Stomach (tissue), 19 donors: ENCODE measurements at regions of chr12 and their contacts with region 1.

Region 1: DNA sequence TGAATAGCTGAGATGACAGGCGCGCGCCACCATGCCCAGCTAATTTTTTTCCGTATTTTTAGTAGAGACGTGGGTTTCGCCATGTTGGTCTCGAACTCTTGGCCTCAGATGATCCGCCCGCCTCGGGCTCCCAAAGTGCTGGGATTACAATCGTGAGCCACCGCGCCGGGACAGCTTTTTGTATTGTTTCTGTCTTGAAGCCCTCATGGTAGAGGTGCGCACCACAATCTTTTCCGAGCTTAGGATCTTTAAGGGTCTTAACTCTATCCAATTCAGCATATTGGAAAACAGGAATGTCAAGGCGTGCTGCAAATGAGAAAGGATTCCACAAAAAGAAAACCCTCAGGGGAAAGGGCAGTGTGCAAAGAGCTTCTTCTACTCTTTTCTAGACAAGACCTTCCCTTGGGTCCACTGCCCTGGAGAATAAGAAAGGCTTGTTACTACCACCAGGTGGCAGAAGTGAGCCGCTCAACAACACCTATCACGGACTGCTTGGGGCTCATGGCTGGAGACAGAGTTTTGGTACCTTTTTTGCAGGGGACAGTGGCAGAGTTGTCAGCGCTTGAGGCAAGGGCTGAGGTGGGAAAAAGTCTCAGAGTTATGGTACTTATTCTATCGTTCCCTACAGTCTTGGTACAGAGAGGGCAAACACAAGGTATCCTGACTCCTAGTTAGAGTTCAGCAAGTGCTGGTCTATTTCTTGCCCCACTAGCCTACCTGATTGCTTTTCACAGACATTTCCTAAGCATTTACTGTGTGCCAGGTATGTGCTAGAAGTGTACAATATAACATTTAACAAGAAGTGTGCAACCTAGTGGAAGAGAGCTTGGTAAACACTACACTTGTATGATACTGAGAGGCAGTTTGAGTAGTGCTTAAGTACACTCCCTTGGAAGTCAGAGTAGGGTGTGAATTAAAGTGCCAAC is 16.4 kb upstream of the SP7 start:
- DNase-seq: peak; percentile 88 to 96
- H3K4me3 ChIP-seq: no peak overlapping the region
- H3K27ac ChIP-seq: peak overlapping the region in 2 of 5 donors; percentile 28 to 46
- H3K4me1 ChIP-seq: peaks cover 0 to 11% (median 9%) of the 10 kb centered on the region in 4 donors
- H3K27me3 ChIP-seq: no peaks in the 10 kb centered on the region
- CTCF ChIP-seq: peak in 6 of 7 experiments; percentile 70 to 95 (median 87)
- EP300 ChIP-seq: no peak
- POLR2A ChIP-seq: no peak

Region 2: DNA sequence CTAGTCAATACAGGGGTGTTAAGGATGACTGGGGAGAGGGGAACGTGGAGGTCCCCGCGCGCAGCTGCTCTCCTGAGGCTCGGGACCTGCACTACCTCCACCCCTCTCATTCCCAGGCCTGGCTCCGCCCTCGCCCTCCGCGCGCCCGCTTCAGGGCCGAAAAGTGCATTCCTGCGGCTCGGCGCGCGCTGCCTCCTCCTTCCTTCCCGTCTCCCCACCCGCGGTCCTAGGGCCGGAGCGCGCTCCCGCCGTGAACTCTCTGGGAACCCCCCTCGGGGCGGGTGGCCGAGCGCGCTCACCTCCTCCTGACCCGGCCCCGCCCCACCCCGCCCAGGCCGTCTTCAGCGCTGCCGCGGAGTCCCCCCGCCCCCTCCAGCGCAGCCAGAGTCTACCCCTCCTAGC is 131.8 kb before region 1 on chr12:
- intact Hi-C with region 1: no loop called
- DNase-seq: peak; percentile 89 to 98
- H3K4me3 ChIP-seq: peak overlapping the region; percentile 63 to 88 (median 83)
- H3K27ac ChIP-seq: peak overlapping the region; percentile 96 to 99 (median 99)
- H3K4me1 ChIP-seq: peaks cover 71 to 91% (median 89%) of the 10 kb centered on the region in 4 donors
- H3K27me3 ChIP-seq: no peaks in the 10 kb centered on the region
- CTCF ChIP-seq: no peak
- EP300 ChIP-seq: no peak
- POLR2A ChIP-seq: no peak

Region 3: DNA sequence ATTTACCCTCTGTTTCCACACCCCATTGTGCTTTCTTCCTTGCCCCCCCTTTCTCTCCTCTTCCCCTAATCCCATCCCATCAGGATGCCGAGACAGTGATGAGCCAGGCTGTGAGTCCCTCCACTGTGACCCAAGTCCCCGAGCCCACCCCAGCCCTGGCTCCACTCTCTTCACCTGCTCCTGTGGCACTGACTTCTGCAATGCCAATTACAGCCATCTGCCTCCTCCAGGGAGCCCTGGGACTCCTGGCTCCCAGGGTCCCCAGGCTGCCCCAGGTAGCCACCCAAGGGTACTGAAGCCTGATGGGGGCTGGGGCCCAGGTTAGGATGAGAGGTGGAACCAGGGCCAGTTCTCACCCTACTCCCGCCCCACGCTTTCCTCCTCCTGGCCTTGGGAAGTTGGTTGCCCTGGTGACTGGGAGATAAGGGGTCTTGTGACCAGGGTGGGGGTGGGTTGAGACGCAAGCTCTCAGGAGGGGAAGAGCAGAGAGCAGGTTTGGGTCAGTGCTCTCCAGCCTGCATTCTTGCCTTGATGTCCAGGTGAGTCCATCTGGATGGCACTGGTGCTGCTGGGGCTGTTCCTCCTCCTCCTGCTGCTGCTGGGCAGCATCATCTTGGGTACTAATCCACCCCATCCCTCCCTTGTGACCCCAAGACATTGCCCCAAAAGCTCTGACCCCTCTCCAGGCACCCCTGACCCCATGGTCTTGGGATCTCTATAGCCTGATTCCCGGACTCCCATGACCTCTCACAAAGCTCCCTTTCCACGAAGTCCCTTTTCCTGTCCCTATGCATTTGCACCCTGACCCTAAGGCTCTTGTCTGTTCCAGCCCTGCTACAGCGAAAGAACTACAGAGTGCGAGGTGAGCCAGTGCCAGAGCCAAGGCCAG is 72.3 kb after region 1 on chr12:
- intact Hi-C with region 1: loop called (anchors 5 kb)
- DNase-seq: peak in 1 of 2 donors; percentile 78
- H3K4me3 ChIP-seq: no peak overlapping the region
- H3K27ac ChIP-seq: no peak overlapping the region
- H3K4me1 ChIP-seq: peaks cover 11 to 19% (median 13%) of the 10 kb centered on the region in 4 donors
- H3K27me3 ChIP-seq: no peaks in the 10 kb centered on the region
- CTCF ChIP-seq: no peak
- EP300 ChIP-seq: no peak
- POLR2A ChIP-seq: no peak